Activated CD8-positive, alpha-beta T cell treated with anti-CD3 and anti-CD28 coated beads for 36 hours (primary cell): ENCODE measurements at regions of chr7 and their contacts with region 1.

Region 1: GRCh38 chr7:135672560-135673359 is 10.4 kb downstream of the STMP1 start:
- DNase-seq: peak; percentile 21
- ATAC-seq: peak; percentile 75
- H3K4me3 Mint-ChIP-seq: no peak overlapping the region
- H3K27ac Mint-ChIP-seq: no peak overlapping the region
- H3K4me1 Mint-ChIP-seq: peaks cover 23% of the 10 kb centered on the region
- H3K27me3 Mint-ChIP-seq: no peaks in the 10 kb centered on the region
- CTCF ChIP-seq: peak; percentile 81

Region 2: DNA sequence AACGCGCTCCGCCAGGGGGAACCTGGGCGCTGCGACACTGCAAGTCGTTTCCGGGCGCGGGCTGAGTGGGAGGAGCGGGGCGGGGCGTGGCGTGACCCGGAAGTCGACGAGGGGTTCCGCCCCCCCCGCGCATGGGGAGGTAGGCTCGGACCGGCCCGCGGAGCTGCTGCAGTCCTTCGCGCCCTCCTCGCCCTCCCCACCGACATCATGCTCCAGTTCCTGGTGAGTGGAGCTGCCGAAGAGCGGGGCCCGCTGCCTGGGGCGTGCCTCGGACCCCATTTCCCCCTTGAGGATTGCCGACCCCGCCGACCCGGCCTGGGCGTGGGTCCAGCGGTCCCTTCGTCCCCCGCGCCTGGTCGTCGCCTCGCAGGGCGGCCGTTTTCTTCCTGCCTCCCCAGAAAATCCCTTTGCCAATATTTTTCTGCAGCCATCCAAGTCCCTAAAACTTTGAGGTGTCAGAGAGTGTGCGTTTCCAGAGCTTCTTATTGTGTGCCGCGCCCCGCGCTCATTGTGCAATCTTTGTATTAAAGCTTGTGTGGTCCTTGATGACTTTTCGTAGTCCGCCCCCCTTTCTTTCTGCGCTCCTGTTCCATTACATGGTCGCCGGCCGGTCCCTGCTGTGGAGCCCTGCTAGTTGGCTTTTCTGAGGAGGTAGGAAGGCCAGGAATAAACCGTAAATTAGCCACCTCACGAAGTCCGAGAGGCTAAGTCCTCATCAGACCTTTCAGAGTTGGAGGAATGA is 10.2 kb before region 1 on chr7 and contains the start of gene STMP1:
- CTCF ChIA-PET with region 1: interaction called, 27 read pairs
- POLR2A ChIA-PET with region 1: interaction called, 10 read pairs
- intact Hi-C with region 1: no loop called
- DNase-seq: peak; percentile 97
- ATAC-seq: peak; percentile 95
- H3K4me3 Mint-ChIP-seq: peak within 1 kb of the TSS; percentile 86
- H3K27ac Mint-ChIP-seq: peak within 1 kb of the TSS; percentile 91
- H3K4me1 Mint-ChIP-seq: peaks cover 41% of the 10 kb centered on the region
- H3K27me3 Mint-ChIP-seq: no peaks in the 10 kb centered on the region
- CTCF ChIP-seq: peak; percentile 59
- total RNA-seq, gene STMP1: 21.1 to 23.4 TPM

Region 3: GRCh38 chr7:135710417-135711138 is 37.8 kb after region 1 on chr7:
- CTCF ChIA-PET with region 1: interaction called, 13 read pairs
- POLR2A ChIA-PET with region 1: no interaction called
- intact Hi-C with region 1: no loop called
- DNase-seq: peak; percentile 9
- ATAC-seq: peak; percentile 71
- H3K4me3 Mint-ChIP-seq: no peak overlapping the region
- H3K27ac Mint-ChIP-seq: no peak overlapping the region
- H3K4me1 Mint-ChIP-seq: no peaks in the 10 kb centered on the region
- H3K27me3 Mint-ChIP-seq: no peaks in the 10 kb centered on the region
- CTCF ChIP-seq: peak; percentile 73